A673 (cell line): ENCODE measurements at regions of chr7 and their contacts with region 1.

Region 1: GRCh38 chr7:127066974-127067373 is 185.8 kb downstream of the GRM8 start:
- DNase-seq: peak; percentile 5
- H3K4me3 ChIP-seq: no peak overlapping the region
- H3K27ac ChIP-seq: no peak overlapping the region
- H3K4me1 ChIP-seq: no peaks in the 10 kb centered on the region
- H3K27me3 ChIP-seq: no peaks in the 10 kb centered on the region
- CTCF ChIP-seq: peak; percentile 18; the same call in 1 of the 2 replicates

Region 2: DNA sequence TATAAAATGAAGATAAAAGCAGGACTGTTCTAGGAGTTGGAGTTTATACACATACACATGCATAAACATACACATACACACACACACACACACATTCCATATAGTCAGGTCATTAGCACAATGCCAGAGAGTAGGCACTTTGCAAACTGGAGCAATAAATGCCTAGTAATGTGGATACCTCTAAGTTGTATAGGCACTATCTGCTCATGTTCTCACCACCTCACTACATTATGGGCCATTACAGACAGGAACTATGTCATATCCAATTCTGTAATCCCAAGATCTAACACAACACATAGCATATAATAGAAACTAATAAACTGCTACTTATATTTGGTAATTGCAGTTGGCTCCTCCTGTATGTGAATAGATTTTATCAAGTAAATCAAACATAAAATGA is 70.2 kb after region 1 on chr7:
- CTCF ChIA-PET with region 1: no interaction called
- POLR2A ChIA-PET with region 1: no interaction called
- intact Hi-C with region 1: loop called (anchors 10 kb)
- DNase-seq: no peak
- H3K4me3 ChIP-seq: no peak overlapping the region
- H3K27ac ChIP-seq: no peak overlapping the region
- H3K4me1 ChIP-seq: no peaks in the 10 kb centered on the region
- H3K27me3 ChIP-seq: no peaks in the 10 kb centered on the region
- CTCF ChIP-seq: no peak

Region 3: DNA sequence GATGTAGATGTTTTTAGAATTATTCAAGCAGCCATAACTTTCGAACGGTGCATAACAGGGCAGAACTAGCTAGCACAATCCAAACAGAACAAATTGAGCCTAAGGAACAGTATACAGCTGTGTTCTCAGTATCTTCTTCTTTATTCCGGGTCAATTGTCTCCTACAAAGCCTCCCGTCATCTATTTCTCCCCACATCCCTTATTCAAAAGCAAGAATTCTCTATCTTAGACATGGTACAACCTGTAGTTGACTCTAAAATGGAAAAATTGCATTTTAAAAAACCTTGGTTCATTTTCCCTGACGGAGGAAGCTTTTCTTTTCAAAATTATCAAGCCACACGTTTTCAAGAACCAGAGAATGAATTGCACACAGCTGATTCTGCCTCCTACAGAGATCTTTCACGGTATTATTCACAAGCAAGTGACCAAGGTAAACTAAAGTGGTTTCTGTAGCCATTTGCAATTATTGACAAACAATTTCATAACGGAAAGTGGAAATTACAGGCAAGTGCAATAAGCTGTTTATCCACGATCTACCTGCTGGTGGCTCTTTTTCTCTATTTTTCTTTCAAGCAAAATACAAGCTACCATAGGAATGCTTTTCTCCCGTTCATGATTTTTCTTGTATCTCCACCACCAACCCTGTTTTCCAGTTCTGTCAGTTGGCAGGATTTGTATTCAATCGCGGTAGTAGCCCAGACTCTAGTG is 183.5 kb after region 1 on chr7:
- CTCF ChIA-PET with region 1: no interaction called
- POLR2A ChIA-PET with region 1: no interaction called
- intact Hi-C with region 1: no loop called
- DNase-seq: peak; percentile 7
- H3K4me3 ChIP-seq: no peak overlapping the region
- H3K27ac ChIP-seq: no peak overlapping the region
- H3K4me1 ChIP-seq: peaks cover 18% of the 10 kb centered on the region
- H3K27me3 ChIP-seq: peaks cover 64% of the 10 kb centered on the region
- CTCF ChIP-seq: no peak; the same call in 1 of the 2 replicates